ENCODE measurements at regions of chr17 and their contacts with region 1.

Region 1: GRCh38 chr17:45060797-45061605 is at the start of gene NMT1:
- DNase-seq: peak; percentile 86
- ATAC-seq: peak; percentile 90
- H3K4me3 Mint-ChIP-seq: peak within 1 kb of the TSS; percentile 100
- H3K27ac Mint-ChIP-seq: peak within 1 kb of the TSS; percentile 100
- H3K4me1 Mint-ChIP-seq: peaks cover 50% of the 10 kb centered on the region
- H3K27me3 Mint-ChIP-seq: no peaks in the 10 kb centered on the region
- CTCF ChIP-seq: no peak
- total RNA-seq, gene NMT1: 154 and 164 TPM in 2 replicates

Region 2: DNA sequence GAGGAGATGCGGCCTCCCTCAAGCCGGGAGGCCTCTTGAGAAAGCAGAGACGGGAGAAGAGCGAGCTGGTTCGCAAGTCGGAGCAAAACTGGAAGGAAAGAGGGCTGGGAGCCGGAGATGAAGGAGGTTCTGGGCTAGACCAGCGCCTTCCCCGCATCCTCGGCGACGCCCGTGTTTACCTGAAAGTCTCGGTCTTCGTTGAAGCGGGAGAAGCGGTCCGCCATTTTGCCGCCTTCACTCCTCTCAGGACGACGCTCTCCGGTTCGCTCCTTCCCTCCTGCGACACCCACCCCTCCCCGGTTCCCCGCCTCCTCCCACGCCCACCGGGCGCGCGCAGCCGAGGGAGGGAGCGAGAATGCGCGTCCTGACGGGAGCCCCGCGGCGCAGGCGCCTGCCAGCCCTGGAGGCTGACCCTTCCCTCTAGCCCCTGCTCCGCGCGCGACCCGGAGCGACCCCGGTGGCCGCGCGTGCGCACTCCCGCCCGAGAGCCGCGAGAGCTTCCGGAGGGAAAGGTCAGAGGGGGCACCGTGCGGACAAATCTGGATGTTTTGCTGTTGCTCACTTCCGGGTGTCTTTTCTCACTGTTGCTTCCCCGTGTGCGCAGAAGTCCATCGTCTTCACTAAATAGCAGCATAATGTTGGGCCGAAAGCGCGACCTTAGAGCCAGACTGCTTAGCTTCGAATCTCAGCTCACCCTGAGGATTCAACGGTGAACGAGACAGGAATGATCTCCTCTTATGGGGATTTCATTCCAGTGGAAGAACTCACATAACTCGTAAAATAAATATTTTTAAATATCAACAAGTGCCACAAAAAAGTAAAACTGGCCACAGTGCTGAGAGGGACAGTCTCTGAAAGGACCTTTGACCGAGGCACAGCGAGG is 557.6 kb before region 1 on chr17 and contains the start of gene GPATCH8:
- CTCF ChIA-PET with region 1: no interaction called
- POLR2A ChIA-PET with region 1: no interaction called
- intact Hi-C with region 1: loop called (anchors 5 kb)
- DNase-seq: peak; percentile 96
- ATAC-seq: peak; percentile 90
- H3K4me3 Mint-ChIP-seq: peak within 1 kb of the TSS; percentile 98
- H3K27ac Mint-ChIP-seq: peak within 1 kb of the TSS; percentile 95
- H3K4me1 Mint-ChIP-seq: peaks cover 38% of the 10 kb centered on the region
- H3K27me3 Mint-ChIP-seq: peaks cover 7% of the 10 kb centered on the region
- CTCF ChIP-seq: no peak
- total RNA-seq, gene GPATCH8: 62.2 and 64.5 TPM in 2 replicates

Region 3: GRCh38 chr17:44899069-44899782 is 161.8 kb before region 1 on chr17 and contains the start of gene EFTUD2:
- CTCF ChIA-PET with region 1: no interaction called
- POLR2A ChIA-PET with region 1: interaction called, 14 read pairs
- intact Hi-C with region 1: loop called (anchors 1 kb)
- DNase-seq: peak; percentile 94
- ATAC-seq: peak; percentile 93
- H3K4me3 Mint-ChIP-seq: peak within 1 kb of the TSS; percentile 96
- H3K27ac Mint-ChIP-seq: peak within 1 kb of the TSS; percentile 99
- H3K4me1 Mint-ChIP-seq: peaks cover 31% of the 10 kb centered on the region
- H3K27me3 Mint-ChIP-seq: peaks cover 4% of the 10 kb centered on the region
- CTCF ChIP-seq: no peak
- total RNA-seq, gene EFTUD2: 168 and 192 TPM in 2 replicates

Region 4: DNA sequence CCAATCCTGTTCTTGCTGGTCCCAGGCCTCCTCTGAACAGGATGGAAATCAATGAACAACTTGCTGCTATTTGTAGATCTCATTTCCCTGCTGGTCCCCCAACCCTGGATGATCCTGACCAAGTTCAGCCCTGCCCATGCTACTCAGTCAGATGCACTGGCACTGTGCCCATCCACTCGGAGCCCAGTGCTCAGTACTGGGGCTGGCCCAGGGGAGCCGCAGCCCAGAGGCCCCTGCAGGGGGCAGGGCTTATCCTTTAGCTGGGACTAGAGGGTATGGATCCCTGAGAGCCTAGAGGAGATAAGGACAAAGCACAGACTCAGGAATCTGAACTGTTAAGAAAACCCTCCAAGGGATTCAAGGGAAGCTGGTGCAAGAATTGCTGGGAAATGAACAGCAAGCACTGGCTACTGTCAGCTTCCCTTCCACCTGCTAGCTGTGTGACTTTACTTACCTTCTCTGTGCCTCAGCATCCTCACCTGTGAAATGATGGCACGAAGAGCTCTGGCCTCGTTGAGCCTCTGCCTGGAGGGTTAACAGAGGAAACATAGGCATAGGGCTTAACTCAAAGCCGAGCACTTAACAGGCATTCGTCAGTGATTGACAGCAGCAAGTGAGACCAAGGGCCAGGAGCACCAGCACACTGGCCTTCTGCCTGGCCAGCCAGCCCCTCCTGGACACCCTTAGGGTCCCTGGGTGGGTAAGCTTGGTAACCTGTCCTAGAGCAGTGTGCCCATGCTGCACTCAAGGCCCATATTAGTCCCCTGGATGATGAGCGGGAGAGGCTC is 63.1 kb before region 1 on chr17:
- CTCF ChIA-PET with region 1: no interaction called
- POLR2A ChIA-PET with region 1: no interaction called
- intact Hi-C with region 1: no loop called
- DNase-seq: no peak
- ATAC-seq: no peak
- H3K4me3 Mint-ChIP-seq: no peak overlapping the region
- H3K27ac Mint-ChIP-seq: no peak overlapping the region
- H3K4me1 Mint-ChIP-seq: no peaks in the 10 kb centered on the region
- H3K27me3 Mint-ChIP-seq: peaks cover 34% of the 10 kb centered on the region
- CTCF ChIP-seq: no peak

Region 5: GRCh38 chr17:45111850-45112249 is 50.8 kb after region 1 on chr17:
- CTCF ChIA-PET with region 1: no interaction called
- POLR2A ChIA-PET with region 1: interaction called, 16 read pairs
- intact Hi-C with region 1: no loop called
- DNase-seq: no peak
- ATAC-seq: peak; percentile 50
- H3K4me3 Mint-ChIP-seq: no peak overlapping the region
- H3K27ac Mint-ChIP-seq: no peak overlapping the region
- H3K4me1 Mint-ChIP-seq: peaks cover 13% of the 10 kb centered on the region
- H3K27me3 Mint-ChIP-seq: no peaks in the 10 kb centered on the region
- CTCF ChIP-seq: no peak

Region 6: GRCh38 chr17:45161019-45161825 is 100.2 kb after region 1 on chr17:
- CTCF ChIA-PET with region 1: no interaction called
- POLR2A ChIA-PET with region 1: interaction called, 20 read pairs
- intact Hi-C with region 1: loop called (anchors 1 kb)
- DNase-seq: peak; percentile 98
- ATAC-seq: peak; percentile 93
- H3K4me3 Mint-ChIP-seq: peak overlapping the region; percentile 99
- H3K27ac Mint-ChIP-seq: peak overlapping the region; percentile 99
- H3K4me1 Mint-ChIP-seq: peaks cover 42% of the 10 kb centered on the region
- H3K27me3 Mint-ChIP-seq: no peaks in the 10 kb centered on the region
- CTCF ChIP-seq: no peak

Region 7: DNA sequence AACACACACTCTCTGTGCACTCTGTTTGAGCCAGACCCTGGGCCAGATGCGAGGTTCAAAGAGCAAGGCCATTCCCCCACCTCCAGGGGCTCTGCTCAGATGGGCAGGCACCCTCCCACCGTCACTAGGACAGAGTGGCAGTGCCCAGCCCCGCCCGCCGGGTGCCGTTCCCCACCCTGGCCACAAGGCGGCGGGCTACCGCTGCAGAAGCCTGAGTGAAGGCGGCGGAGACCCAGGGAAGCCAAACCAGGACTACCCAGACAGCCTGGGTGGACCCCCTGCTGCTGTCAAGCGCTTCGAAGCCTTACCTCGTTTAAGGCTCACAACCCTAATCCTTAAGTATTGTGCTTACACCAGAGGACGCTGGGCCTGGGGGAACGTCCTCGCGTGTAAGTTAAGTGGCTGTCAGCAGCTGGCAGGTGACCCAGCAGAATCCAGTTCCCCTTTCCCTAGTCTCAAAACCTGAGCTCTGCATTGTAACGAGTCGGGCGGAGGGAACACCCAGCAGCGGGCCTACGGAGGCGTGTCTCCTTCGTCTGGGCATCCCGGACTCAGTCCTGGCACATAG is 367.1 kb after region 1 on chr17:
- CTCF ChIA-PET with region 1: no interaction called
- POLR2A ChIA-PET with region 1: no interaction called
- intact Hi-C with region 1: loop called (anchors 2 kb)
- DNase-seq: peak; percentile 88
- ATAC-seq: peak; percentile 73
- H3K4me3 Mint-ChIP-seq: peak overlapping the region; percentile 84
- H3K27ac Mint-ChIP-seq: peak overlapping the region; percentile 92
- H3K4me1 Mint-ChIP-seq: peaks cover 35% of the 10 kb centered on the region
- H3K27me3 Mint-ChIP-seq: no peaks in the 10 kb centered on the region
- CTCF ChIP-seq: peak; percentile 96